ENCODE measurements at regions of chr11 and their contacts with region 1.

Region 1: GRCh38 chr11:43282607-43283440 is 29.0 kb upstream of the API5 start:
- DNase-seq: peak; percentile 58
- ATAC-seq: peak; percentile 57
- H3K4me3 Mint-ChIP-seq: no peak overlapping the region
- H3K27ac Mint-ChIP-seq: no peak overlapping the region
- H3K4me1 Mint-ChIP-seq: no peaks in the 10 kb centered on the region
- H3K27me3 Mint-ChIP-seq: no peaks in the 10 kb centered on the region

Region 2: DNA sequence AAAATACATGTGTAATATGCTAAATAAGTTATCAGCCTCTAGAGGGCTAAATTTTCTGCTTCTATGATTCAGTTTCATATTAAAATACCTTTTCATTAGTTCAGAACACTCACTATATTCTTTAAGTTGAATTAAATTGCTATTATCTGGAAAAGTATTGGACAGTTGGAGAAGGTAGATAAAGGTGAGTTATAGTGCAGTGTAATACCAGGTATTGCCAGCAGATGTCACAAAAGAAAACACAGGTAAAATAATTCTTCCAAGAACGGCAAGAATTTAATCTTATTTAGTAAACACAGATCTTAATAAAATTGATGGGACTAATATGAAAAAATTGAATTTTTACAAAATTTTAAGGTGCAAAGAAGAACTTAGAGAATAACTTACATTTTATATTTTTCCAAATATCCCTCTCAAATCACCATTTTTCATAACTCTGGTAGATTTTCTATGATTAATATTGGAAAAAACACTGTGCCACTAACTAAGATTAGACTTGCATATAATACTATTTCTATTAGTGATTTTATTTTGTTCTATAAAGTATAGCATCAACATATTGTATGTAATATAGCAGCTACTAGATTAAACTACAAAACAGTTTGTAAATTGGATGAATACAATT is 1821.7 kb before region 1 on chr11:
- CTCF ChIA-PET with region 1: interaction called, 13 read pairs
- POLR2A ChIA-PET with region 1: no interaction called
- DNase-seq: no peak
- ATAC-seq: no peak
- H3K4me3 Mint-ChIP-seq: no peak overlapping the region
- H3K27ac Mint-ChIP-seq: no peak overlapping the region
- H3K4me1 Mint-ChIP-seq: no peaks in the 10 kb centered on the region
- H3K27me3 Mint-ChIP-seq: peaks cover 4% of the 10 kb centered on the region

Region 3: GRCh38 chr11:43172477-43172876 is 110.3 kb before region 1 on chr11:
- CTCF ChIA-PET with region 1: no interaction called
- POLR2A ChIA-PET with region 1: no interaction called
- DNase-seq: no peak
- ATAC-seq: no peak
- H3K4me3 Mint-ChIP-seq: no peak overlapping the region
- H3K27ac Mint-ChIP-seq: no peak overlapping the region
- H3K4me1 Mint-ChIP-seq: no peaks in the 10 kb centered on the region
- H3K27me3 Mint-ChIP-seq: no peaks in the 10 kb centered on the region

Region 4: GRCh38 chr11:43212279-43212678 is 70.5 kb before region 1 on chr11:
- CTCF ChIA-PET with region 1: no interaction called
- POLR2A ChIA-PET with region 1: no interaction called
- DNase-seq: no peak
- ATAC-seq: no peak
- H3K4me3 Mint-ChIP-seq: no peak overlapping the region
- H3K27ac Mint-ChIP-seq: no peak overlapping the region
- H3K4me1 Mint-ChIP-seq: no peaks in the 10 kb centered on the region
- H3K27me3 Mint-ChIP-seq: no peaks in the 10 kb centered on the region

Region 5: DNA sequence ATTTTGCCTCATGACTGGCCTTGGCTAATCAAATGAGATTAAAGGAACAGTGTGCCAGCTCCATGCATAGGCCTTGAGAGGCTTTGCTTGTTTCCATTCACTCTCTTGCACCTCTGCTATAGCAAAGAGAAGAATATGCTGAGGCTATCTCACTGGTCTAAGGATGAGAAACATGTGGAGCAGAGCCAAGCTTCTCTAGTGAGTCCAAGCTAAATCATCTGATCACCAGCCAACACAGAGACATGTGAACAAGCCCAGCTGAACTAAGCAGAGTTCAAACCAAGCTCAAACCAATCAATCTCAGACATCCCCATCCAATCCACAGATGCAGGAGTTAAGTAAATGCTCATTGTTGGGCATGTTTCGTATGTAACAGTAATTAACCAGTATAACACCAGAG is 40.4 kb before region 1 on chr11:
- CTCF ChIA-PET with region 1: no interaction called
- POLR2A ChIA-PET with region 1: no interaction called
- DNase-seq: no peak
- ATAC-seq: no peak
- H3K4me3 Mint-ChIP-seq: no peak overlapping the region
- H3K27ac Mint-ChIP-seq: no peak overlapping the region
- H3K4me1 Mint-ChIP-seq: no peaks in the 10 kb centered on the region
- H3K27me3 Mint-ChIP-seq: no peaks in the 10 kb centered on the region

Region 6: DNA sequence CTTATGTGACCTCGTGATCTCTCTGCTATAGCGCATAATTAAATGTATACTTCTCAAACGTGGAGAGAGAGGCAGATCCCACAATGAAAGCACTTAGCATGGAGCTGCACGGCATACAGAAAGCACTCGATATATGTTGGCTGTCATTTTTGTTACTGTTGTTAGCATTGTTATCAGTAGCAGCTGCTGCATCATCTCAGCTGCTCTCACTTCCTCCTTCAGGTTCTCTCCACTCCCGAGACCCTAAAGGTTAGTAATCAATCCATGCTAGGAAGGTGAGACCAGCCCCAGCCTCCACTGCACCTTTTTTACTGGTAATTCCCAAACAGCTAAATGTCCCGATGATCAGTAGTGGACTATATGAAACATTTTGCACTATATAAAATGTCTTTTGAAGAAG is 15.6 kb after region 1 on chr11:
- CTCF ChIA-PET with region 1: interaction called, 11 read pairs
- POLR2A ChIA-PET with region 1: no interaction called
- DNase-seq: no peak
- ATAC-seq: no peak
- H3K4me3 Mint-ChIP-seq: no peak overlapping the region
- H3K27ac Mint-ChIP-seq: no peak overlapping the region
- H3K4me1 Mint-ChIP-seq: no peaks in the 10 kb centered on the region
- H3K27me3 Mint-ChIP-seq: peaks cover 8% of the 10 kb centered on the region